Naive thymus-derived CD4-positive, alpha-beta T cell (primary cell): ENCODE measurements at regions of chr18 and their contacts with region 1.

Region 1: DNA sequence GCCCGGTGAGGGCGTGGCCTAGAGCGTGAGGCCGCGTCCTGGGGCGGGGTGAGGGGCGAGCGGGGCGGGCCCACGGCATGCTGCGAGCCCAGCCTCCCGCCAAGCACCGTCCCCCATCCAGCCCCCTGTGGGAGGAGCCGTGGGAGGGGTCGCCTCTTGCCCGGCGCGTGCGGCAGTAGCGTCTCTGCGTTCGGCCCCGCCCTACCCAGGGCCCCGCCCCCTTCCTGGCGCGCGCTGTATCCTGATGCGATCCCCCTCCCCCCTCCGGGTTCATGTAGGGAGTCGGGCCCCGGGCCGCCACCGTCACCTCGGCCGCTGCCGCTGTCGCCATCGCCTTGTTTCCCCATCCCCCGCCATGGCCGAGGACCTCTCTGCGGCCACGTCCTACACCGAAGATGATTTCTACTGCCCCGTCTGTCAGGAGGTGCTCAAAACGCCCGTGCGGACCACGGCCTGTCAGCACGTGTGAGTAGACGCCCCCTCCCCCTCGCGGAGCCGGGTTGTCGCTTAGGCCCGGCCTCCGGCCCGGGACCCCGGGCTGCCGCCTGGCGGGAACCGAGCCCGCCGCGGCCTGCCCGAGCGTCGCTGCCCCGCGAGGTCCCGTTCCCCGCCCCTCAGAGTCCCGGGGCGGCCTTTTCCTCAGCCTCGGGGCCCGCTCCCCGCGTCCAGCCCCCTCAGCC is 888 bp downstream of the RNF138 start:
- DNase-seq: peak; percentile 98 to 100 (median 99)
- ATAC-seq: peak; percentile 95
- H3K4me3 ChIP-seq: peak overlapping the region; percentile 72
- H3K4me3 Mint-ChIP-seq: peak overlapping the region; percentile 90 to 100 (median 98)
- H3K27ac ChIP-seq: peak overlapping the region; percentile 100
- H3K27ac Mint-ChIP-seq: peak overlapping the region; percentile 91 to 98 (median 97)
- H3K4me1 ChIP-seq: peaks cover 32 to 35% of the 10 kb centered on the region in 2 donors
- H3K4me1 Mint-ChIP-seq: peaks cover 35 to 57% (median 46%) of the 10 kb centered on the region in 7 donors
- H3K27me3 ChIP-seq: no peaks in the 10 kb centered on the region
- H3K27me3 Mint-ChIP-seq: no peaks in the 10 kb centered on the region

Region 2: DNA sequence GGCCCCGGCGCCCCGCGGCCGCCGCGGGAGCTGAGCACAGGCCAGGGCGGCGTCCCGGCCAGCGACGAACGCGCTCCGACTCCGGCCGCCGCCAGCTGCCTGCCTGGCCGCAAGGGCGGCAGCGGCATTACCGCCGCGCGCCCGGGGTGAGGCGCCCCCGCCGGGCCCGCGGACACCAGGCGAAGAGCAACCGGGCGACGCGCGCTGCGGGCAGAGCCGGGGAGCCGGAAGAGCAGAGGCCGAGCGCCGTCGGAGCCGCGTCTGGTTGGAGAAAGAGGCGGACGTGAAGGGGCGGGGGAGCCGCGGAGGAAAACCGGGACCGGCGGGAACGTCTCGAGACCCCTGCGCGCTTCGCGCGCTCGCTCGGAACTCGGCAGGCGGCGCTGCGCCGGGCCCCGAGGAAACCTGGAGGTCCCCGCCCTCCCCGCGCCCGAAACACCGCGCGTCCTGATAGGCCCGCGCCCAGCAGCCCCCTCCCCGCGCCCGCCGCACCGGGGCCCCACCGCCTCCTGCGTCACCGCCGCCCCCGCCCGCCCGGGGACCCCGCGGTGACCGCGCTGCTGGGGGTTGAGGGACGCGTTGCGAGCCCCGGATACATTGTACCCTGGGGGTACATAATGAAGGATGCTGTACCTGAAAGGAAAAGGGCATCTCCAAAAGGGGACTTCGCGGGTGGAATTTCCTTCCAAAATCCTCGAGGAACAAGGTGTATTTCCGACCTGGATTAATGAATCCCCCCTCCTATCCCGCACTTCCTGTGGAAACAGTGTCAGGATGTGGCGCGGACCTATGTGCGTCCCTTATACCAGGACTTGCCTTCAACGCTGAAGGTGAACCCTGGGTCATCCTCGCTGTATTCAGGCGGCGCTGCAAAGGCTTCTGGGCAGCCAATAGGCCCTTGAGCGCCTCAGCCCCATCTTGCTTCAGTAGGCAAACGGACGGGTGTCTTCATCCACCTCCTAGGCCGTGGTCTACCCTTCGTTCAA is 407.2 kb before region 1 on chr18:
- CTCF ChIA-PET with region 1: no interaction called
- POLR2A ChIA-PET with region 1: no interaction called
- intact Hi-C with region 1: loop called in 1 of 2 experiments (anchors 10 kb)
- DNase-seq: peak; percentile 14 to 64 (median 35)
- ATAC-seq: peak; percentile 82
- H3K4me3 ChIP-seq: peak overlapping the region; percentile 24
- H3K4me3 Mint-ChIP-seq: peak overlapping the region; percentile 80 to 90 (median 86)
- H3K27ac ChIP-seq: no peak overlapping the region
- H3K27ac Mint-ChIP-seq: peak overlapping the region in 5 of 9 donors; percentile 57 to 79 (median 67)
- H3K4me1 ChIP-seq: no peaks in the 10 kb centered on the region
- H3K4me1 Mint-ChIP-seq: peaks cover 8 to 18% (median 15%) of the 10 kb centered on the region in 7 donors
- H3K27me3 ChIP-seq: no peaks in the 10 kb centered on the region
- H3K27me3 Mint-ChIP-seq: peaks cover 13 to 63% (median 39%) of the 10 kb centered on the region in 5 donors

Region 3: GRCh38 chr18:32018331-32019250 is 74.0 kb before region 1 on chr18 and contains the start of gene RNF125:
- CTCF ChIA-PET with region 1: interaction called, 5 read pairs
- POLR2A ChIA-PET with region 1: interaction called, 100 read pairs
- intact Hi-C with region 1: loop called (anchors 1 kb)
- DNase-seq: peak; percentile 83 to 97 (median 95)
- ATAC-seq: peak; percentile 87
- H3K4me3 ChIP-seq: peak within 1 kb of the TSS; percentile 89
- H3K4me3 Mint-ChIP-seq: peak within 1 kb of the TSS; percentile 87 to 99 (median 96)
- H3K27ac ChIP-seq: peak within 1 kb of the TSS; percentile 87
- H3K27ac Mint-ChIP-seq: peak within 1 kb of the TSS; percentile 87 to 99 (median 96)
- H3K4me1 ChIP-seq: peaks cover 34% of the 10 kb centered on the region in 2 donors
- H3K4me1 Mint-ChIP-seq: peaks cover 36 to 72% (median 57%) of the 10 kb centered on the region in 7 donors
- H3K27me3 ChIP-seq: no peaks in the 10 kb centered on the region
- H3K27me3 Mint-ChIP-seq: peaks cover 0 to 5% (median 0%) of the 10 kb centered on the region in 5 donors
- total RNA-seq, gene RNF125: 30.3 to 59.8 (median 37.1) TPM

Region 4: DNA sequence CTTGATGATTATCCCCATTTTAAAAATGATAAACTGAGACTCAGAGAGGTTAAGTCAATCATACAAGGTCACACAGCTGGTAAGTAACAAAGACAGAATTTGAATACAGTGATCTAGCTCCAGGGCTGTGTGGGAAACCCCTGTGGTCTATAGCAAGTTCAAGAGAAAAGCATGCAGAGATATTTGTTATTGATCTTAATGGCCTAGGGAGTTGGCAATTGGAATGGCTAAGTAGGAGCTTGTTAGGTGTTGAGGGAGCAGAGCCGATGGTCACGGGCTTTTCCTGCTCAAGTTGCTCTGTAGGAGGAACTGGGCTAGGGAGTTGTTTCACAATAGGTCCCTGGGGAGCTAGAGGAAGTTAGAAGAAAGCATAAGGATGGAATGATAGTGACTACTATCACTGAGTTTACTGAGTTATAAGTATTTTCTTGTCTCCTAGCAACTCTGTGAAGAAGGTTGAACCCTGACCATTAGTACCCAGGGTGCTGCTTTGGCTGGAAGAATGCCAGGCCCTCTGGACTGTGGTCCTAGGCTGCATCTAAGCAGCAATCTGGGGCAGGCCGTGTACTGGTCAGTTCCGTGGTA is 44.0 kb before region 1 on chr18:
- CTCF ChIA-PET with region 1: no interaction called
- POLR2A ChIA-PET with region 1: no interaction called
- intact Hi-C with region 1: loop called in 1 of 2 experiments (anchors 2 kb)
- DNase-seq: no peak
- ATAC-seq: peak; percentile 46
- H3K4me3 ChIP-seq: peak overlapping the region; percentile 12
- H3K4me3 Mint-ChIP-seq: peak overlapping the region in 9 of 10 donors; percentile 1 to 83 (median 36)
- H3K27ac ChIP-seq: peak overlapping the region; percentile 2
- H3K27ac Mint-ChIP-seq: peak overlapping the region in 8 of 9 donors; percentile 1 to 89 (median 58)
- H3K4me1 ChIP-seq: peaks cover 21% of the 10 kb centered on the region in 2 donors
- H3K4me1 Mint-ChIP-seq: peaks cover 22 to 54% (median 36%) of the 10 kb centered on the region in 7 donors
- H3K27me3 ChIP-seq: no peaks in the 10 kb centered on the region
- H3K27me3 Mint-ChIP-seq: no peaks in the 10 kb centered on the region

Region 5: DNA sequence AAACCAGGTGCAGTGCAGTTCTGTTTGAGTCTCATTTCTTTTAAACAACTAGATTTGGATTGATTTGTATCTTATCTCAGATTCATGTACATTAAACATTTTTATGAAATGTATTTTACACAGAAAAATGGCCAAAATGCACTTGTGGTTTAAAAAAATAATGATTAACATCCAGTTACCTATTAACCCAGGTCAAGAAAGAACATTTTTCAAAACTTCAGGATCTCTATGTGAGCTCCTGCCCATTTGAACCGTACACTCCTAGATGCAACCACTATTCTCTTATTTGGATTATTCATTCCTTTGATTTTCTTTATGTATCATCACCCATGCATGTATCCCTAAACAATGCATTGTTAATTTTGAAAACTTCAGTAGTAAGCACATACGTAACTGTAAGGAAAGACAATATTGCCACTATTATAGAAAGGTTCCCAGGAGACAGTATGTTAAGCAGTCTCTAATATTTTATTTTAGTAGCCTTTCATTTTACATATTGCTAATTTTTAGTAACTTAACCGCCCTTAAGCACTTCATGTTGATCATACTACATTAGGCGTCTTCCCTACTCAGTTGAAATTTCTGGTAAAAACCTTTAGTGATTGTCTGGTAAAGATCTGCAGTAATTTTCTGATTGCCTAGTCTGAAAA is 21.9 kb after region 1 on chr18:
- CTCF ChIA-PET with region 1: interaction called, 3 read pairs
- POLR2A ChIA-PET with region 1: no interaction called
- intact Hi-C with region 1: loop called in 1 of 2 experiments (anchors 2 kb)
- DNase-seq: no peak
- ATAC-seq: no peak
- H3K4me3 ChIP-seq: no peak overlapping the region
- H3K4me3 Mint-ChIP-seq: no peak overlapping the region
- H3K27ac ChIP-seq: no peak overlapping the region
- H3K27ac Mint-ChIP-seq: peak overlapping the region in 7 of 9 donors; percentile 14 to 86 (median 30)
- H3K4me1 ChIP-seq: peaks cover 0 to 6% of the 10 kb centered on the region in 2 donors
- H3K4me1 Mint-ChIP-seq: peaks cover 24 to 76% (median 68%) of the 10 kb centered on the region in 7 donors
- H3K27me3 ChIP-seq: no peaks in the 10 kb centered on the region
- H3K27me3 Mint-ChIP-seq: no peaks in the 10 kb centered on the region

Region 6: GRCh38 chr18:32261003-32261402 is 168.4 kb after region 1 on chr18:
- CTCF ChIA-PET with region 1: no interaction called
- POLR2A ChIA-PET with region 1: no interaction called
- intact Hi-C with region 1: no loop called
- DNase-seq: no peak
- ATAC-seq: no peak
- H3K4me3 ChIP-seq: no peak overlapping the region
- H3K4me3 Mint-ChIP-seq: no peak overlapping the region
- H3K27ac ChIP-seq: no peak overlapping the region
- H3K27ac Mint-ChIP-seq: no peak overlapping the region
- H3K4me1 ChIP-seq: no peaks in the 10 kb centered on the region
- H3K4me1 Mint-ChIP-seq: peaks cover 0 to 2% (median 0%) of the 10 kb centered on the region in 7 donors
- H3K27me3 ChIP-seq: no peaks in the 10 kb centered on the region
- H3K27me3 Mint-ChIP-seq: peaks cover 12 to 42% (median 30%) of the 10 kb centered on the region in 5 donors

Region 7: GRCh38 chr18:32470713-32471633 is 378.4 kb after region 1 on chr18 and contains the start of gene GAREM1:
- CTCF ChIA-PET with region 1: no interaction called
- POLR2A ChIA-PET with region 1: no interaction called
- intact Hi-C with region 1: loop called (anchors 1 to 2 kb)
- DNase-seq: peak; percentile 67 to 82 (median 77)
- ATAC-seq: peak; percentile 95
- H3K4me3 ChIP-seq: peak within 1 kb of the TSS; percentile 58
- H3K4me3 Mint-ChIP-seq: peak within 1 kb of the TSS; percentile 78 to 91 (median 89)
- H3K27ac ChIP-seq: no peak within 1 kb of the TSS
- H3K27ac Mint-ChIP-seq: peak within 1 kb of the TSS in 7 of 9 donors; percentile 21 to 86 (median 56)
- H3K4me1 ChIP-seq: peaks cover 9 to 14% of the 10 kb centered on the region in 2 donors
- H3K4me1 Mint-ChIP-seq: peaks cover 12 to 33% (median 26%) of the 10 kb centered on the region in 7 donors
- H3K27me3 ChIP-seq: peaks cover 4 to 5% of the 10 kb centered on the region in 2 donors
- H3K27me3 Mint-ChIP-seq: peaks cover 28 to 79% (median 33%) of the 10 kb centered on the region in 5 donors
- total RNA-seq, gene GAREM1: 0.13 to 0.51 (median 0.43) TPM in 3 of 5 experiments, not detected in the others